Activated CD8-positive, alpha-beta memory T cell treated with anti-CD3 and anti-CD28 coated beads, Interleukin-2, amount 10 ng/mL, durations not matched to agents 7 days and 5 days (primary cell): ENCODE measurements at regions of chr1 and their contacts with region 1.

Region 1: GRCh38 chr1:202315576-202316168 is 26.1 kb downstream of the UBE2T start:
- DNase-seq: peak; percentile 84
- ATAC-seq: peak; percentile 86
- H3K4me3 Mint-ChIP-seq: no peak overlapping the region
- H3K27ac Mint-ChIP-seq: no peak overlapping the region
- H3K4me1 Mint-ChIP-seq: peaks cover 20% of the 10 kb centered on the region
- H3K27me3 Mint-ChIP-seq: peaks cover 17% of the 10 kb centered on the region

Region 2: GRCh38 chr1:202274611-202275010 is 41.1 kb before region 1 on chr1:
- CTCF ChIA-PET with region 1: interaction called, 112 read pairs
- DNase-seq: peak; percentile 71
- ATAC-seq: peak; percentile 76
- H3K4me3 Mint-ChIP-seq: no peak overlapping the region
- H3K27ac Mint-ChIP-seq: no peak overlapping the region
- H3K4me1 Mint-ChIP-seq: peaks cover 3% of the 10 kb centered on the region
- H3K27me3 Mint-ChIP-seq: peaks cover 13% of the 10 kb centered on the region

Region 3: GRCh38 chr1:202279806-202280205 is 35.9 kb before region 1 on chr1:
- CTCF ChIA-PET with region 1: interaction called, 112 read pairs
- DNase-seq: no peak
- ATAC-seq: no peak
- H3K4me3 Mint-ChIP-seq: no peak overlapping the region
- H3K27ac Mint-ChIP-seq: no peak overlapping the region
- H3K4me1 Mint-ChIP-seq: peaks cover 15% of the 10 kb centered on the region
- H3K27me3 Mint-ChIP-seq: peaks cover 17% of the 10 kb centered on the region

Region 4: GRCh38 chr1:202291961-202292712 is 23.5 kb before region 1 on chr1:
- CTCF ChIA-PET with region 1: interaction called, 10 read pairs
- DNase-seq: no peak
- ATAC-seq: no peak
- H3K4me3 Mint-ChIP-seq: no peak overlapping the region
- H3K27ac Mint-ChIP-seq: no peak overlapping the region
- H3K4me1 Mint-ChIP-seq: peaks cover 18% of the 10 kb centered on the region
- H3K27me3 Mint-ChIP-seq: peaks cover 13% of the 10 kb centered on the region